Activated T-helper 1 cell treated with anti-CD3 and anti-CD28 coated beads, Interleukin-12 subunit alpha, Interleukin-12 subunit beta, Interleukin-2, Interleukin-4 antibody, amounts not matched to agents 30 ng/mL and 10 ng/mL and 1 ng/mL, durations not matched to agents 14 hours and 24 hours and 36 hours (primary cell): ENCODE measurements at regions of chrX and their contacts with region 1.

Region 1: GRCh38 chrX:69538321-69538876 is 34.3 kb downstream of the NALF2 start:
- DNase-seq: peak; percentile 62
- H3K4me3 Mint-ChIP-seq: peak overlapping the region; percentile 22
- H3K27ac Mint-ChIP-seq: no peak overlapping the region
- H3K4me1 Mint-ChIP-seq: peaks cover 17% of the 10 kb centered on the region
- H3K27me3 Mint-ChIP-seq: peaks cover 2% of the 10 kb centered on the region

Region 2: GRCh38 chrX:69615779-69616456 is 77.5 kb after region 1 on chrX and contains the start of gene EDA:
- intact Hi-C with region 1: loop called (anchors 2 kb)
- DNase-seq: peak; percentile 68
- H3K4me3 Mint-ChIP-seq: peak within 1 kb of the TSS; percentile 77
- H3K27ac Mint-ChIP-seq: no peak within 1 kb of the TSS
- H3K4me1 Mint-ChIP-seq: peaks cover 17% of the 10 kb centered on the region
- H3K27me3 Mint-ChIP-seq: peaks cover 14% of the 10 kb centered on the region
- total RNA-seq, gene EDA: 1.6 and 2.4 TPM in 2 replicates